Caki2 (cell line): ENCODE measurements at regions of chr17 and their contacts with region 1.

Region 1: GRCh38 chr17:78708510-78708973 is 73.5 kb downstream of the CYTH1 start:
- DNase-seq: peak; percentile 74

Region 2: DNA sequence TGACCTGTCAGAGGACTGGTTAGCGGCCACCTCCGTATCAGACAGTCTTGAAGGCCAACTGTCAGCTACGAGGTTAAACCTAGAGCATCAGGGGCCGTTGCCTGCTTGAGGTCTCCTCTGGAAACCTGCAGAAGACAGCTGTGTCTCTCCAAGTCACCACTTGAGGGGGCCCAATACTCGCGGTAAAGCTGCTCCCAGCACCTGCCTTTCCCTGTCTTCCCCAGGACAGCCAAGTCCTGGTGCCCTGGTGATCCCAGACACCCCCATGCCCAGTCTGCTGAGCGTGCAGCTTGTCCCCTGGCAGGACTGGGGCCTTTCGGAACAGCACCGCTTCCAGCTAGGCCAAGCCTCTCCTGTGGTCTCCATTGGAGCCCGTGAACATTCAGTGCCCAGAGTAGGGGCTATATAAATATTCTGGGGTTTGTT is 211.4 kb before region 1 on chr17:
- in situ Hi-C with region 1: loop called (anchors 25 kb)
- DNase-seq: peak; percentile 77

Region 3: GRCh38 chr17:78634154-78634553 is 74.4 kb before region 1 on chr17:
- in situ Hi-C with region 1: loop called (anchors 5 kb)
- DNase-seq: no peak

Region 4: GRCh38 chr17:78745407-78746088 is 37.0 kb after region 1 on chr17:
- in situ Hi-C with region 1: no loop called
- DNase-seq: peak; percentile 18

Region 5: DNA sequence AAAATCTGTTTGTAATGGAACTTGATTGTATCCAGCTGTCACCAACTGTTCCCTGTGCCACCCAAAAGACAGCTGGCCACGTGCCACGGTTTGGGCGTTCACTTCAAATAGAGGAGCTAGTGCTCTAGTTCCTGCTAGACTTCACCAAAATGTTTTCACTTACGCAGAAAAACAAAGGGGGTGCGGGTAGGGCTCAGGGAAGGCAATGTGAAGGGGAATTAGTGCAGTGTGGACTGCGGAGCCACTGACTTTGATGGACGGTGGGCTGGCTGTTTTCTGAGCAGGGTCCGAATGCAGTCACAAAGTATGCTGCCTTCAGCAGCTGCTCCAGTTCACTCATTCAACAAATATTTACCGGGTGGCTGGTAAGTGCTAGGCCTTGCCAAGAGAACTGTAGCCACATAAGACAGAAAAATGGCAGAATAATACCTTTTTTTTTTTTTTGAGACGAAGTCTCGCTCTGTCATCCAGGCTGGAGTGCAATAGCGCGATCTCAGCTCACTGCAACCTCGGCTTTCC is 81.2 kb after region 1 on chr17:
- in situ Hi-C with region 1: no loop called
- DNase-seq: no peak

Region 6: DNA sequence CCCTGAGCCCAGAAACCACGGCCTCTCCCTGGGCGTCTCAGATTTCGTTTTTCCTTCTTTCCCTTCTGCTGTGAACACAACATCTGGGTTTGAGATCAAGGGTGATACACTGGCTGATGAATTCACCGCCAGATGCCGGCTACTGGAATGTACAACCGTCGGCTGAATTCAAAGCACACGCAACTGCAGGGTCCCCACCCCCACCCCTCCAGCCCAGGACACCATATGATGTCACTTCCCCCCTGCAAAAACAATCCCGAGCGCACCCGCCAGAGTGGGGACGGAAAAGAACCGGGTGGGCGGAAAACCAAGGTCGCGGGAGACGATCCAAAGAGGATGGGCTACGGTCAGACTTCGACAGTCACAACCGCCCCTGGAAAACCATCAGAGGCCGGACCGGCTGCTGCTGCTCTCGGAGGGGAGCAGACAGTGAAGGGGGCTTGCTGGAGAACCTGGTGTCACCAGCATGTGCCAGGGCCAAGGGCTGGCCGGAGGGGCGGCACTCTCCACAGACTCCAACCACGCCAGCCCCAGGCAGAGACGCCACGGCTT is 171.2 kb after region 1 on chr17:
- in situ Hi-C with region 1: no loop called
- DNase-seq: no peak